ENCODE measurements at regions of chr5 and their contacts with region 1.

Region 1: DNA sequence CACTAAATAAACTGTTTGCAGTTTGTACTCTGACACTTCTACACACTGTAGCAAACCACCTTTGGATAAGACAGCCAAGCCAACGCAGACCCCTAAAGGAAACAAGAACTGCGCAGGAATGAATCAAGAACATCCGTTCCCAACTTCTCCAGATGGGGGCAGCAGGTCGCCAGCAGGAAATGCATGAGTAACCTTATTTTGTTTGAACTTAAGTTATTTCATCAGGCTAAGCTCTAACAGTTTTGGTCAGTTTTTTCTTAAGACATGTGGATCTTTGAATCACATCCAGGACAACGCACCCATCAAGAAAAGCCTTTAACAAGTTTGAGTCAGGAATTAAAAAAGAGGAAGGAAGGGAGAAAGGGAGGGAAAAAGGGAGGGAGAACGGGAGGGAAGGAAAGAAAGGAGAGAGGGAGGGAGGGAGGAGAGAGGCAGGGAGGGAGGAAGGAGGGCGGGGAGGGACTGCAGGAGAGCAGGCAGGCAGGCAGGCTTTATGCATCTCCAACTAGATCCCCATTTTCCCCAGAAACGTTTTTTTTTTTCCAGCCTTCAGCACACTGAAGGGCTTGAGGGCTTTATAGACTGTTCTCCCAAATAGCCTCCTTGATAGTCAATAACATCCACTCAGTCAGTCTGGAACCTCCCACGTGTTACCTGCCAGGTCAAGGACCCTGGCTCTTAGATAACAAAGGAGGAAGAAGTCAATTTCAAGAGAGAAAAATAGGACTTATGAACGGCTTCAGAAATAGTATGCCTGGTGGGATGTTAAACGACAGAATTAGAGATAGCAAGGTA is 22.2 kb downstream of the BHMT start:
- DNase-seq: no peak

Region 2: GRCh38 chr5:79020861-79021561 is 112.8 kb before region 1 on chr5:
- intact Hi-C with region 1: loop called (anchors 1 kb)
- DNase-seq: no peak

Measured in cardiac septum (tissue), 1 donor.